Natural killer cell (primary cell): ENCODE measurements at regions of chr3 and their contacts with region 1.

Region 1: DNA sequence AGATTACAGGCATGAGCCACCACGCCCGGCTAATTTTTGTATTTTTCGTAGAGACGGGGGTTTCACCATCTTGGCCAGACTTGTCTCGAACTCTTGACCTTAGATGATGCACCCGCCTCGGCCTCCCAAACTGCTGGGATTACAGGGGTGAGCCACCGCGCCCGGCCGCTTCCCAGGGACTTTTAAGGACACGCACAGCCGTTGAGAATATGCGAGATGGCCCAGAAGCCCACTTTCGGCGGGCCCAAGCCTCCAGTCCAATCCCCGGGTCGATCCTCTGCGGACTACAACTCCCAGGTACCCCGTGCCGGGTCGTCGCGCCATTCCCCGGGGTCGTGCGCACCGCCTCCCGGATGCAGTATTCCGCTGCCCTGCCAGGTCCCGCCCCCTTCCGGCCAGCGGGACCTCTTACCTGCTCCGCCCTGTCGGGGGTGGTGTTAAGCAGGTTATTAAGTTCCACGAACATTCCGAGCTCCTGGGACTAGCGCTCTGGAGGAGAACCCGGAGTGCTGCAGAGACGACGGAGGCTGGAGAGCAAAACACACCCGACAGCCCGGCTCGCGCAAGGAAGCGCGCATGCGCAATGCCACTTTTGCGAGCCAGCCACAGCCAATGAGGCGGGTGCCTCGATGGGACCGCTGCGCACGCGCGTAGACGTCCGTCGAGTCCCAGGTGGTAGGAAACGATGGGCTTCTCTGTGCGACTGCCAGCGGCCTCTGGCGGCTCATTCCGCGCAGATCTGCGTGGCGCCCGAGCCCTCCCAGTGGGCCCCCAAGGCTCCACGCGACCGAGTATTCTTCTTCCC is at the start of gene ELP6:
- DNase-seq: peak; percentile 95 to 100
- ATAC-seq: peak; percentile 94 to 99 (median 94)
- H3K4me3 ChIP-seq: peak within 1 kb of the TSS; percentile 65
- H3K4me3 Mint-ChIP-seq: peak within 1 kb of the TSS; percentile 92
- H3K27ac ChIP-seq: peak within 1 kb of the TSS; percentile 76
- H3K27ac Mint-ChIP-seq: peak within 1 kb of the TSS; percentile 91 to 93
- H3K4me1 ChIP-seq: peaks cover 14% of the 10 kb centered on the region
- H3K4me1 Mint-ChIP-seq: peaks cover 0 to 17% of the 10 kb centered on the region in 2 donors
- H3K27me3 ChIP-seq: no peaks in the 10 kb centered on the region
- H3K27me3 Mint-ChIP-seq: no peaks in the 10 kb centered on the region
- CTCF ChIP-seq: peak; percentile 61
- total RNA-seq, gene ELP6: 18.1 to 37.4 (median 33.4) TPM

Region 2: DNA sequence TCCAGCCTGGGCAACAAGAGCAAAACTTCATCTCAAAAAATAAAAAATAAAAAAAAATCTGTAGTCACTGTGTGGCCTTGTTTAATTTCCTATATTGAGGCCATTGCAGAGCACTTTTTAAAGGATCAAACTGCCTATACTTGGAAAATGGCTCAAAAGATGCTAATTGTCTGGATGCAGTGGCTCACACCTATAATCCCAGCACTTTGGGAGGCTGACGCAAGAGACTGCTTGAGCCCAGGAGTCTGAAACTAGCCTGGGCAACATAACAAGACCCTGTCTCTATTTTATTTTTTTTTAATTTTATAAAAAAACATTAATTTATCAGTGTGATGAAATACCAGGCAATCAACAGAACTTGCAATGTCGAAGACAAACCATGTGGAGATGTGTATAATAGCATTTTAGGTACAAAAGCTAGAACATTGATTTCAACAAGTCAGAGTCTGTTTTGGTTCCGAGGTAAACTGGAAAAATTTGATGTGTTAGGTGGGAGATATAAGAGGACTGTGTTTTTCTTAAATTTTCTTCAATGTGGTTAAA is 302.4 kb before region 1 on chr3:
- intact Hi-C with region 1: no loop called
- DNase-seq: no peak
- ATAC-seq: no peak
- H3K4me3 ChIP-seq: no peak overlapping the region
- H3K4me3 Mint-ChIP-seq: no peak overlapping the region
- H3K27ac ChIP-seq: no peak overlapping the region
- H3K27ac Mint-ChIP-seq: no peak overlapping the region
- H3K4me1 ChIP-seq: no peaks in the 10 kb centered on the region
- H3K4me1 Mint-ChIP-seq: no peaks in the 10 kb centered on the region
- H3K27me3 ChIP-seq: no peaks in the 10 kb centered on the region
- H3K27me3 Mint-ChIP-seq: no peaks in the 10 kb centered on the region
- CTCF ChIP-seq: no peak

Region 3: GRCh38 chr3:47420511-47421484 is 92.5 kb before region 1 on chr3:
- intact Hi-C with region 1: loop called (anchors 1 kb)
- DNase-seq: peak; percentile 80 to 95
- ATAC-seq: peak; percentile 94 to 99 (median 96)
- H3K4me3 ChIP-seq: no peak overlapping the region
- H3K4me3 Mint-ChIP-seq: peak overlapping the region; percentile 47
- H3K27ac ChIP-seq: peak overlapping the region; percentile 49
- H3K27ac Mint-ChIP-seq: peak overlapping the region; percentile 86 to 91
- H3K4me1 ChIP-seq: peaks cover 24% of the 10 kb centered on the region
- H3K4me1 Mint-ChIP-seq: peaks cover 14 to 30% of the 10 kb centered on the region in 2 donors
- H3K27me3 ChIP-seq: no peaks in the 10 kb centered on the region
- H3K27me3 Mint-ChIP-seq: no peaks in the 10 kb centered on the region
- CTCF ChIP-seq: peak; percentile 85

Region 4: GRCh38 chr3:47475570-47476329 is 37.6 kb before region 1 on chr3 and contains the start of gene SCAP:
- intact Hi-C with region 1: loop called (anchors 1 kb)
- DNase-seq: peak; percentile 95 to 98
- ATAC-seq: peak; percentile 92 to 96 (median 93)
- H3K4me3 ChIP-seq: peak within 1 kb of the TSS; percentile 83
- H3K4me3 Mint-ChIP-seq: peak within 1 kb of the TSS; percentile 94
- H3K27ac ChIP-seq: peak within 1 kb of the TSS; percentile 86
- H3K27ac Mint-ChIP-seq: peak within 1 kb of the TSS; percentile 90 to 95
- H3K4me1 ChIP-seq: peaks cover 24% of the 10 kb centered on the region
- H3K4me1 Mint-ChIP-seq: peaks cover 23 to 30% of the 10 kb centered on the region in 2 donors
- H3K27me3 ChIP-seq: no peaks in the 10 kb centered on the region
- H3K27me3 Mint-ChIP-seq: no peaks in the 10 kb centered on the region
- CTCF ChIP-seq: peak; percentile 95
- total RNA-seq, gene SCAP: 63.9 to 104 (median 82.7) TPM

Region 5: GRCh38 chr3:47791193-47791855 is 278.0 kb after region 1 on chr3:
- intact Hi-C with region 1: loop called (anchors 2 kb)
- DNase-seq: no peak
- ATAC-seq: no peak
- H3K4me3 ChIP-seq: no peak overlapping the region
- H3K4me3 Mint-ChIP-seq: no peak overlapping the region
- H3K27ac ChIP-seq: no peak overlapping the region
- H3K27ac Mint-ChIP-seq: no peak overlapping the region
- H3K4me1 ChIP-seq: peaks cover 11% of the 10 kb centered on the region
- H3K4me1 Mint-ChIP-seq: no peaks in the 10 kb centered on the region
- H3K27me3 ChIP-seq: no peaks in the 10 kb centered on the region
- H3K27me3 Mint-ChIP-seq: no peaks in the 10 kb centered on the region
- CTCF ChIP-seq: no peak

Region 6: DNA sequence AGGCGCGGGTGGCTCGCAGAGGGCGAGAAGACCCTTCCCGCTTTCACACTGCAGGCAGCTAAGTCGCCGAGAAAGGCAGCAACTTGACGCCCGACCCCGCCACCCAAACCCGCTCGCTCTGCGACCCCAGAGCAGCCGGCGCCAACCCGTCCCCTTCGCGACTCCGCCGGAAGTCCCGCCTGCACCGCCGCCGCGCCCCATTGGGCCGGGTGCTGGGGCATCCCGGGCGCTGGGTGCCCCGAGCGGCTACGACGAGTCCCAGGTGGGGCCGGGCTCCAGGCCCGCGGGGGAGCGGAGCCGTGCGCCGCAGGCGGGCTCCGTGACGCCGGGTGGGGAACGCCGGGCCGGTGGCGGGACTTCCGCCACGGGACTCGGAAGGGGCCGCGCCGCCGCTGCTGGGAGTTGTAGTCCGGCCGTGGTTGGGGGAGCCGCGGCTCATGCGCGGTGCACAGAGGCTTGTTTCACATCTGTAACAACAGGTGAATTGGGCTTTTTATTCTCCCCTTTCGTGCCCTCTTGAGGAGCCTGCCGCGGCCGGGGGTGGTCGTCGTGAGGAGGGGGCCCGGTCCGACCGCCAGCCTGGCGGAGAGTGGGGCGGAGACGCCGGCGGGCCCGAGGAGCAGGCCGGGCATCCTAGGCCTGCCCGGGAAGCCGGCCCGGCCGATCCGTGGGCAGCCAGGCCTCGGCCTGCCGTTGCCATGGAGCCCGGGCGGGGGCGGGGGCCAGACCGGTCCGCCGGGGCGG is 289.6 kb after region 1 on chr3 and contains the start of gene DHX30:
- intact Hi-C with region 1: loop called (anchors 5 kb)
- DNase-seq: peak; percentile 78 to 92
- ATAC-seq: peak; percentile 90 to 95 (median 93)
- H3K4me3 ChIP-seq: peak within 1 kb of the TSS; percentile 60
- H3K4me3 Mint-ChIP-seq: peak within 1 kb of the TSS; percentile 96
- H3K27ac ChIP-seq: peak within 1 kb of the TSS; percentile 73
- H3K27ac Mint-ChIP-seq: peak within 1 kb of the TSS; percentile 87 to 90
- H3K4me1 ChIP-seq: peaks cover 19% of the 10 kb centered on the region
- H3K4me1 Mint-ChIP-seq: peaks cover 10 to 19% of the 10 kb centered on the region in 2 donors
- H3K27me3 ChIP-seq: no peaks in the 10 kb centered on the region
- H3K27me3 Mint-ChIP-seq: no peaks in the 10 kb centered on the region
- CTCF ChIP-seq: no peak
- total RNA-seq, gene DHX30: 72.0 to 83.4 (median 82.1) TPM